Posterior vena cava (tissue), 2 donors: ENCODE measurements at regions of chr1 and their contacts with region 1.

Region 1: GRCh38 chr1:154479764-154480421 is 22.1 kb upstream of the TDRD10 start:
- DNase-seq: no peak

Region 2: GRCh38 chr1:154546264-154547063 is 66.6 kb after region 1 on chr1:
- intact Hi-C with region 1: loop called (anchors 5 to 10 kb)
- DNase-seq: no peak

Region 3: DNA sequence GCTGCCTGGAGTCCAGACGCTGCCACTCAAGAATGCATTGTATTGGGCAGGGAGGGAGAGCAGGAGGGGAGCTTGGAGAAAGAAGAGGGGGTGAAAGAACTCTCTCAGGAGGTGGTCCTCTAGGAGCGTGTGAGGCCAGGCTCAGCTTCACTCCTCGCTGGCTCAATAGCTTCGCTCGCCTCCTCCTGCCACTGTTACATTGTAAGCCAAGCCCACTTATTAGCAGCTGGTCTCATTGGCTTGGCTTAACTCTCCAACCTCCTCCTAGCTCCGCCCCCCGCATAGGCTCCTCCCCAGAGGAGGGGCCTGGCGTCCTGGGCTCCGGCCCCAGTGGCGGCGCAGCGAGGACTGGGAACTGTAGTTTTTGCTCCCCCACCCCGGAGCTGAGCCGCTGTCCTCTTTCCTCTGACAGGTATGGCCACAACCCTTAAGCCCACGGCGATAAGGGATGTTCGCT is 390.2 kb after region 1 on chr1 and contains the start of gene KCNN3:
- intact Hi-C with region 1: loop called in 1 of 2 experiments (anchors 10 kb)
- DNase-seq: peak; percentile 96
- total RNA-seq, gene KCNN3: 1.9 to 2.0 TPM